Prostate gland (tissue), 2 donors: ENCODE measurements at regions of chr9 and their contacts with region 1.

Region 1: GRCh38 chr9:37920471-37921167 is 16.7 kb upstream of the SLC25A51 start:
- DNase-seq: no peak
- H3K4me3 ChIP-seq: no peak overlapping the region
- H3K27ac ChIP-seq: no peak overlapping the region
- H3K4me1 ChIP-seq: peaks cover 3% of the 10 kb centered on the region
- H3K27me3 ChIP-seq: no peaks in the 10 kb centered on the region
- CTCF ChIP-seq: no peak
- POLR2A ChIP-seq: no peak

Region 2: GRCh38 chr9:37820142-37820541 is 100.5 kb before region 1 on chr9:
- intact Hi-C with region 1: no loop called
- DNase-seq: no peak
- H3K4me3 ChIP-seq: no peak overlapping the region
- H3K27ac ChIP-seq: no peak overlapping the region
- H3K4me1 ChIP-seq: no peaks in the 10 kb centered on the region
- H3K27me3 ChIP-seq: no peaks in the 10 kb centered on the region
- CTCF ChIP-seq: no peak
- POLR2A ChIP-seq: no peak

Region 3: GRCh38 chr9:37994639-37995347 is 74.2 kb after region 1 on chr9:
- intact Hi-C with region 1: loop called (anchors 5 kb)
- DNase-seq: peak; percentile 57
- H3K4me3 ChIP-seq: no peak overlapping the region
- H3K27ac ChIP-seq: peak overlapping the region; percentile 35 to 36
- H3K4me1 ChIP-seq: no peaks in the 10 kb centered on the region
- H3K27me3 ChIP-seq: no peaks in the 10 kb centered on the region
- CTCF ChIP-seq: no peak
- POLR2A ChIP-seq: no peak

Region 4: DNA sequence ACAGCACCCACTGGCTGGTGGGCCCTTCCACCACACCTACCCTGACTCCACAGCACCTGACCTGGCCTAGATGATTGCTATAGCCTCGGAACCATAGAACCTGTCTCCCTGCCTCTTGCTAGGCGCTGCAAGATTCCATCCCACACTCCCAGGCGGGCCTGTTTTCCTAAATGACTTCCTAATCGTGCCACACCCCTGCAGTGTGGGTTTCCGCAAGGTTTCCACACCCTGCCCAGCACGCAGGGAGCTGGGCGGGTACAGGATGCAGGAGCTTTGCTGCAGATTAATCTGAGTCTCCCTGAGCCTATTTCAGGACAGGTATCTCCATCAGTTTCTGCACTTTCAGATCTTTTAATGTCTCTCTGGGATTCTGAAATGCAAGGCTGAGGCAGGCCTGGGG is 85.5 kb after region 1 on chr9:
- intact Hi-C with region 1: no loop called
- DNase-seq: no peak
- H3K4me3 ChIP-seq: no peak overlapping the region
- H3K27ac ChIP-seq: no peak overlapping the region
- H3K4me1 ChIP-seq: peaks cover 7% of the 10 kb centered on the region
- H3K27me3 ChIP-seq: no peaks in the 10 kb centered on the region
- CTCF ChIP-seq: no peak
- POLR2A ChIP-seq: no peak

Region 5: GRCh38 chr9:38371495-38371894 is 450.9 kb after region 1 on chr9:
- intact Hi-C with region 1: no loop called
- DNase-seq: peak; percentile 38
- H3K4me3 ChIP-seq: no peak overlapping the region
- H3K27ac ChIP-seq: no peak overlapping the region
- H3K4me1 ChIP-seq: no peaks in the 10 kb centered on the region
- H3K27me3 ChIP-seq: no peaks in the 10 kb centered on the region
- CTCF ChIP-seq: peak in 3 of 4 experiments; percentile 23 to 57 (median 50)
- POLR2A ChIP-seq: no peak